ENCODE measurements at regions of chr11 and their contacts with region 1.

Region 1: GRCh38 chr11:7672960-7673723 is at the start of gene CYB5R2:
- DNase-seq: no peak
- H3K4me3 ChIP-seq: peak within 1 kb of the TSS; percentile 51
- H3K27ac ChIP-seq: no peak within 1 kb of the TSS
- H3K27me3 ChIP-seq: peaks cover 20% of the 10 kb centered on the region
- CTCF ChIP-seq: no peak
- polyA plus RNA-seq, gene CYB5R2: 7.3 and 7.4 TPM in 2 replicates

Region 2: DNA sequence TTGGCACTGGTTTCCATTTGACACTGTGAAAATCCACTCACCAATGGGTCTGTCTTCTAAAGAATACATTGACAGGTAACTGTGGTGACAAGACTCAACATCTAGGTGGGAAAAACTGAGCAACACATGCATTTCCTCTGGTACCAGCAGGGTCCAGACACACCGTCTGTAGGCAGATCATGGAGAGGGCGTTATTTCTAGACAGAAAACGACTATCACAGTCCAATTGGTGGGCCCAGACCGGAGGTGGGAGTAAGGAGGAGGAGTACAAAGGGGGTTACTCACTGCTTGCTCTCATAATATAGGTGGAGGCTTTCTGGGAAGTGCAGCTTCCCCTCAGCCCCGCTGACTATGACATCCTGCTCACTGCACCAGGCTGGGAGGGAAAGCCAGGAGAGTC is 23.3 kb after region 1 on chr11:
- CTCF ChIA-PET with region 1: interaction called, 14 read pairs
- POLR2A ChIA-PET with region 1: no interaction called
- DNase-seq: no peak
- H3K4me3 ChIP-seq: no peak overlapping the region
- H3K27ac ChIP-seq: no peak overlapping the region
- H3K27me3 ChIP-seq: peaks cover 20% of the 10 kb centered on the region
- CTCF ChIP-seq: no peak